ENCODE measurements at regions of chr10 and their contacts with region 1.

Region 1: GRCh38 chr10:22714479-22715289 is at the start of gene PIP4K2A:
- DNase-seq: peak; percentile 57 to 82
- H3K4me3 ChIP-seq: peak within 1 kb of the TSS; percentile 97 to 98
- H3K27ac ChIP-seq: peak within 1 kb of the TSS; percentile 84 to 86
- H3K4me1 ChIP-seq: peaks cover 0 to 27% (median 19%) of the 10 kb centered on the region in 4 donors
- H3K27me3 ChIP-seq: no peaks in the 10 kb centered on the region
- CTCF ChIP-seq: no peak

Region 2: DNA sequence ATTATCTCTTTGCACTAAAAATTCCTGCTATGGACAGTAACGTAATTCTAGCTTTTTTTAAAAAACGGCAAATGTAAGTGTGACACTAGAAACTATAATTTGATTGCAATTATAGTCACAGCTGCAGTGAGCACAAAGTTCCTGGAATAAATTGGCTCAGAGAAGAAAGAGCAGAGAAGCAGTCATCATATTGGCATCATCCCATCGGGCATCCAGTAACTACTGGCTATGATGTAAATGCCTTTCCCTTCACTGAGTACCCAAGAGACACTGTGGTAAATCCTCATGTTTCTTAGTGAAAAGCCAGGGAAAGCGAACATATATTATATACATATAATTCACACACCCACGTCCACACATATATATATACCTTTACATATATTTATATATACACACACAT is 43.9 kb before region 1 on chr10:
- intact Hi-C with region 1: no loop called
- DNase-seq: no peak
- H3K4me3 ChIP-seq: no peak overlapping the region
- H3K27ac ChIP-seq: no peak overlapping the region
- H3K4me1 ChIP-seq: peaks cover 0 to 65% (median 2%) of the 10 kb centered on the region in 4 donors
- H3K27me3 ChIP-seq: no peaks in the 10 kb centered on the region
- CTCF ChIP-seq: no peak

Region 3: GRCh38 chr10:22849077-22849805 is 134.6 kb after region 1 on chr10:
- intact Hi-C with region 1: loop called (anchors 10 kb)
- DNase-seq: peak; percentile 94
- H3K4me3 ChIP-seq: peak overlapping the region; percentile 2 to 5
- H3K27ac ChIP-seq: peak overlapping the region; percentile 84 to 91
- H3K4me1 ChIP-seq: peaks cover 0 to 45% (median 29%) of the 10 kb centered on the region in 4 donors
- H3K27me3 ChIP-seq: no peaks in the 10 kb centered on the region
- CTCF ChIP-seq: no peak

Region 4: GRCh38 chr10:22997102-22997501 is 282.4 kb after region 1 on chr10:
- intact Hi-C with region 1: no loop called
- DNase-seq: no peak
- H3K4me3 ChIP-seq: no peak overlapping the region
- H3K27ac ChIP-seq: no peak overlapping the region
- H3K4me1 ChIP-seq: no peaks in the 10 kb centered on the region
- H3K27me3 ChIP-seq: peaks cover 0 to 14% of the 10 kb centered on the region in 2 donors
- CTCF ChIP-seq: no peak

Region 5: GRCh38 chr10:23095404-23095965 is 380.8 kb after region 1 on chr10 and contains the start of gene MSRB2:
- intact Hi-C with region 1: loop called (anchors 10 kb)
- DNase-seq: peak; percentile 91 to 97
- H3K4me3 ChIP-seq: peak within 1 kb of the TSS; percentile 92 to 96
- H3K27ac ChIP-seq: peak within 1 kb of the TSS; percentile 93 to 96
- H3K4me1 ChIP-seq: peaks cover 6 to 23% (median 12%) of the 10 kb centered on the region in 4 donors
- H3K27me3 ChIP-seq: no peaks in the 10 kb centered on the region
- CTCF ChIP-seq: no peak

Region 6: DNA sequence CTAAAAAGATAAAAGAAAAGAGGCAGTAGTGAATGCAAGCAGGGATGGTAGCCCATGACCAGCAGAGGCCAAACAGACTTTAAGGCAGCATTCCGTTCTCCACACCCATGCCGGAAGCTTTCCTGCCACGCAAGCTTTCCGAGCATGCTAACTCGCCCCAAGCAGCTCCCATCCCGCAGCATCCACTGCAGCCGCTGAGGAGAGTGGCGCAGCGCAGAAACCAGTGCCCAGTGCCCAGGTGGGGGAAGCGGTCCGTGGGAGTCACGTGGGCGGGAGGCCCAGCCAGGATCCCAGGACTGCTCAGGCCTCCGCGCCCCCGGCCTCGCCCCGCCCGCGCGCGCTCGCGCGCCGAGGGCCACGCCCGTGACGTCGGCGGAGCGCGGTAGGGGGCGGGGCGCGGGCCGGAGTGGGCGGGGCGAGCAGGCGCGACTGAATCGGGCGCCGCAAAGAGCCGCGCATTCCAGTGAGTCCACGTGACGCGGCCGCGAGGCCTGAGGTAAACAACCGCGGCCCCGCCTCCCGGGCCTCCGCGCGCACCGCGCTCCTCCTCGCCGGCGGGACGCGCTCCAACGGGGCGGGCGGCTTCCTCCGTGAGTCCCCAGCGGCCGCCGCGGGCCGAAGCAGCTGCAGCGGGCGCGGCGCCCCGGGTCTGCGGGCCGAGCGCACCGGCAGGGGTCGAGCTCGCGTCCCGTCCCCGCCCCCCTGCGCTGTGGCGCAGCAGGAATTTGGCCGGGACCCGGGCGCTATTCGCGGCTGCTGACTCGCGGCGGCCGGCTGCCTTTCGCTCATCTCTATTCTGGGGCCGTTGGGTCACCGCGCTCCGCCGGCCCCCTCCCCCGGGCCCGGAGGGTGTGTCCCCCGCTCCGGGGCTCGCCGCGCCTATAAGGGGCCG is 724.1 kb after region 1 on chr10 and contains the start of gene OTUD1:
- intact Hi-C with region 1: loop called (anchors 5 kb)
- DNase-seq: peak; percentile 97 to 98
- H3K4me3 ChIP-seq: peak within 1 kb of the TSS; percentile 96
- H3K27ac ChIP-seq: peak within 1 kb of the TSS; percentile 91 to 97
- H3K4me1 ChIP-seq: peaks cover 0 to 34% (median 20%) of the 10 kb centered on the region in 4 donors
- H3K27me3 ChIP-seq: no peaks in the 10 kb centered on the region
- CTCF ChIP-seq: peak; percentile 11 to 29